Activated B cell treated with CpG ODN at 0.5 μM for 24 hours (primary cell): ENCODE measurements at regions of chr21 and their contacts with region 1.

Region 1: DNA sequence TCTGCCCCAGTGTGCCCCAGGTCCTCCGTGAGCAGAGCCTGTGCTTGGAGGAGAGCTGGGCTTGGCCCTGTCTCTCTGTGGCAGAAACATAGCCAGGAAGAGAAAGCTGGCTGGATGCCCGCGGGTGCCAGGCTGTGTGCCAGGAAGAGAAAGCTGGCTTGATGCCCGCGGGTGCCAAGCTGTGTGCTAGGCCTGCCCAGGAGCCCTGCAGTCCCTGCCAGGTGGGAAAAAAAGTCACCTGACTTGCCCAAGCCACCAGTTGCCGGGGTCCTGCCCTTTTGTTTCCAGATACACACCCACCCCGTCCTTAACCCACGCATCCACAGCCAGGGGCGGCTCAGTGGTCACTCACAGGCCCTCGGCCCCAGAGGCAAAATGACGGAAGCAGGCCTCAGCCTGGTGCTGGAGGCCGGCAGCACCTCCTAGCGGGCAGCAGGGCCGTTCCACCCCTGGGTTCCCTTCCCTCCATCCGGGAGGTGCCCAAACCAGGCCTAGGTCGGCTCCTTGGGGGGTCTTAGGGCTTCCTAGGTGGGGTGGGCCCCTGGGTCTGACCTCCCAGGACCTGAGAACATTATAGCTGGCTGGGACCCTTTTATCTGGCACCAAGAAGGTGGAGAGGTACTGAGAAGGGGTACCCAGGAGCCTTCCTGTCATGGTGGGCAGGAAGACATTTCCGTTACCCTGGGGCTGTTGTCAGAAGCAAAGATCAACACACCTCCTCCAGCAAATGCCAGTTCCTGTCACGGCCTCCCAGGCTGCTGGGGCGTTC is 9.1 kb downstream of the ITGB2 start:
- DNase-seq: no peak
- ATAC-seq: peak; percentile 36
- H3K4me3 Mint-ChIP-seq: peak overlapping the region; percentile 58
- H3K27ac Mint-ChIP-seq: peak overlapping the region; percentile 57
- H3K4me1 Mint-ChIP-seq: peaks cover 88% of the 10 kb centered on the region
- H3K27me3 Mint-ChIP-seq: no peaks in the 10 kb centered on the region
- CTCF ChIP-seq: no peak

Region 2: DNA sequence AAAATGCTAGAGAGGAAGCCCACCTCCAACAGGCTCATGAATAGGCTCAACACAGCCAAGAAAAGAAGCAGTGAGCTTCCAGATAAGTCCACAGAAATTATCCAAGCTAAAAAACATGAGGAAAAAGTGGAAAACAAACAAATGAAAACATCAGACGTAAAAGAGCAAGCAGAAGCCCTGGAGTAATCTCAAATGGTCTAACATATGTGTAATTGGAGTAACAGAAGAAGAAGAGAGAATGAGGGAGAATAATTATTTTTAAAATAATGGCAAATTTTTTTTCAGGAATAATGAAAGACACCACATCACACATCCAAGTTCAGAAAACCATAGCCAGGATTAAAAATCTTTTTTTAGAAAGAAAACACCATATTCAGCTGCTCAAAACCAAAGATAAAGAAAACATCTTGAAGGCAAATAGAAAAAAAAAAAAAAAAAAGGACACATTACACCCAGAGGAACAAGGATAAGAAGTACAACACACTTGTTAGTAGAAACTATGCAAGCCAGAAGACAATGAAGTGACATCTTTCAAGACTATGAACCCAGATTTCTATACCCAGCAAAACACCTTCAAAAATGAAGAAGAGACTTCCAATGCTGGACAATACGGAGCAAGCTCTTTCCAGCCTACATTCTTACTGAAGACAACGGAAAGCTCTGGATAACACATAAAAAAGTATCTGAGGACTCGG is 83.1 kb before region 1 on chr21:
- CTCF ChIA-PET with region 1: no interaction called
- POLR2A ChIA-PET with region 1: interaction called, 11 read pairs
- intact Hi-C with region 1: no loop called
- DNase-seq: no peak
- ATAC-seq: no peak
- H3K4me3 Mint-ChIP-seq: no peak overlapping the region
- H3K27ac Mint-ChIP-seq: no peak overlapping the region
- H3K4me1 Mint-ChIP-seq: peaks cover 18% of the 10 kb centered on the region
- H3K27me3 Mint-ChIP-seq: no peaks in the 10 kb centered on the region
- CTCF ChIP-seq: no peak

Region 3: DNA sequence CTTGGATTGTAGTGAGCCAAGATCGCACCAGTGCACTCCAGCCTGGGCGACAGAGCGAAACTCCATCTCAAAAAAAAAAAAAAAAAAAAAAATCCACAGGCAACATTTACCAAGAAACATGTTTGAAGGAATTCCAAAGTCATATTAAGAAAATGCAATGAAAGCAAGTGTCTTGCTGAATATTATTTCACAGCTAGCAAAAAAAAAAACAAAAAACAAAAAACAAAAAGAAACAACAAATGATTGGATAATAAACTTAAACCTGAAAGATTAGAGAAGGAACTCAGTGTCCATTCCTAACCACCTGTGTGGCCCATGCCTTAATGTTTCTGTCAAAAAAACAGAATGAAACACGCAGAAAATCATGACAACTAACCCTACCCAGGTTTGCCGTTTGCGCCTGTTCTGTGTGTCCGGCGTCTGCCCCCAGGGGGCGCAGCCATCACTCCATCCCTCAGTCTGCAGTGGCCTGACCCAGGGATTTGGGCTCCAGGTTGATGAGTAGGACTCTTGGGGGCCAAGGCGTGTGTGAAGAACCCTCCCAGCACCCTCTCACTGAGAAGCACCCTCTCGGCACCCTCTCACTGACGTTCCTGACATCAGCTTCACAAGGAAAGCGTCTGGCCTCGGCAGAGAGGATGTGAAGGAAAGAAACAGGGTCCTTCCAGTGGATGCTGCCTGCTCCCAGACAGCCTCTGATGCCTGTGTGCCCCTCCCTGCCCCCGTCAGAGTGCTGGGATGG is 18.9 kb before region 1 on chr21:
- CTCF ChIA-PET with region 1: interaction called, 8 read pairs
- POLR2A ChIA-PET with region 1: interaction called, 7 read pairs
- intact Hi-C with region 1: loop called (anchors 2 kb)
- DNase-seq: peak; percentile 73
- ATAC-seq: peak; percentile 85
- H3K4me3 Mint-ChIP-seq: no peak overlapping the region
- H3K27ac Mint-ChIP-seq: no peak overlapping the region
- H3K4me1 Mint-ChIP-seq: peaks cover 24% of the 10 kb centered on the region
- H3K27me3 Mint-ChIP-seq: no peaks in the 10 kb centered on the region
- CTCF ChIP-seq: peak; percentile 98